Cardiac septum (tissue), 1 donor: ENCODE measurements at regions of chr20 and their contacts with region 1.

Region 1: DNA sequence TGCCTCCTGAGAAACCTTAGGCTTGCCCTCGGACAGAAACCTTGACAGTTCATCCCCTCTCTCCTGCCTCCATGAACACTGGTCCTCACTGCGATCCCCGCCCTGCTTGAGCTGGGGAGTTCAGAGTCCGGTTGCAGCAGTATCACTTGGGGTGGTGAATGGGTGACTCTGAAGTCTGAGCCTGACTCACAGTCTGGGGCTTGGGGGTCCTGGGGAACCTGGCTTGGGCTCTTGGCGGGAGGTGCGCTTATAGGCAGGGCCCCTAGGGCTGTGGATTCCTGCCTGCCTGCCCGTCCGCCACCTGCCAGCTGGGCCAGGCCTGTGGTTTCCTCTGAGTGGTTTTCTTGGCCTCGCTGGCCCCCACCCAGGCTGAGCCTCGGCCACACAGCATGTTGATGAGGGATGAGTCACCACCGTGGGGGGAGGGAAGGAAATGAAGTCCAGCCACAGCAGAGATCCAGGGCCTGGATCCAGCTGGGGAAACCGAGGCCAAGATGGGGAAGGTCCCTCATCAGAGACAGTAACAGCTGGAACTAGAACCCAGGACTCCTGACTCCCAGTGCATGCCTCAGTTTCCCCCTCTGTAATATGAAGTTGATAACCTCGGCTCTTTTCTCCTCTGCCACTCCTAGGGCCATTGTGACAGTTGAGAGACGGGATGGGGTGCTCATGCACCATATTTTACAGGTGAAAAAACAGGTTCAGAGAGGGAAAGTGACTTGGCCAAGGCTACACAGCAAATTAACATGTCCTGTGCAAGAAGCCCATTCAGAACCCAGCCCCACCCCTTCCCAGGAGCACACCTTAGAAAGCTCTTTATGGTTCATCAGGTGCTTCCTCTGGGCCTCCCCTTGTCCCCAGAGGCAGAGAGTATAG is 9.2 kb downstream of the FOXS1 start:
- DNase-seq: peak; percentile 88

Region 2: GRCh38 chr20:31661625-31662371 is 174.4 kb before region 1 on chr20:
- intact Hi-C with region 1: loop called (anchors 10 kb)
- DNase-seq: peak; percentile 93

Region 3: DNA sequence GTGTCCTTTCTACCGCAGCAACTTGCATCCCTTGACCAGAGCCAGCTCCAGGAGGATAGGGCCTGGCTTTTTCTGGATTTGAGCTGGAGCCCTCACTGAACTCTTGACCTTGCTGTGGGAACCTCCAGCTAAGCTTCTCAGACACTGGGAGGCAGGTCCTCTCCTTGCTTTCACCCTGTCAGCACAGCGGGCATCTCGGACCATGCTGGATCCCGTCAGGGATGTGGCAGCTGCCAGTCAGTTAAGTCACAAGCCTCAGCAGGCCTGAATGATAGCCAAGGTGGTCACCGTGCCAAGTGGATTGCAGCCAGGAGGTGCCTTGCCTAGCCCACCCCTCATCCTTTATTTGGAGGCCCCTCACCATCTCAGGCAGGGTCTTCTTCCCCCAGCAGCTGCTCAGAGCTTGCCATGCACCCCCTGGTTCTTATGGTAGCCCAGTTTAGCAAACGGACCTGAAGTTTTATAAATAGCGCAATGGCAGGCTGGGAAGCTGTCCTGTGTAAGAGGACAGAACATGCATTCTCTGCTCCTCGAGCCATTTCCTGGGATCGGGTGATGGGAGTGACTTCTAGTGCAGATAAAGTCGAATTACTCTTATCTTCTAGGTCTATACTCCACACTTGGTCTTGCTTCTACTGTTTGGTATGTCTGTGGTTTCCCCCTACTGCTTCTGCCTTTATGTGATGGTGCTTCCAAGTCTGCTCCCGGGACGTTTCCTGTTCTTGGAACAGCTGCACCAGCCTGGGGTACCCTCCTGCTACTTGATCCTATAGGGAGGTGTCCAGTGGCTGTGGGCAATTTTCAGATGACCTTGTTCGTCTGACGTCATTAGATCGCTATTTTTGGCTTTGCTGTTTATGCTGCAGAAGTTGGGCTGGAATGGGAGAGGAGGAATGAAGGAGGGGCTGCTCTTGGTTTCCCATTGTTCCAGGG is 24.2 kb before region 1 on chr20:
- intact Hi-C with region 1: no loop called
- DNase-seq: no peak

Region 4: DNA sequence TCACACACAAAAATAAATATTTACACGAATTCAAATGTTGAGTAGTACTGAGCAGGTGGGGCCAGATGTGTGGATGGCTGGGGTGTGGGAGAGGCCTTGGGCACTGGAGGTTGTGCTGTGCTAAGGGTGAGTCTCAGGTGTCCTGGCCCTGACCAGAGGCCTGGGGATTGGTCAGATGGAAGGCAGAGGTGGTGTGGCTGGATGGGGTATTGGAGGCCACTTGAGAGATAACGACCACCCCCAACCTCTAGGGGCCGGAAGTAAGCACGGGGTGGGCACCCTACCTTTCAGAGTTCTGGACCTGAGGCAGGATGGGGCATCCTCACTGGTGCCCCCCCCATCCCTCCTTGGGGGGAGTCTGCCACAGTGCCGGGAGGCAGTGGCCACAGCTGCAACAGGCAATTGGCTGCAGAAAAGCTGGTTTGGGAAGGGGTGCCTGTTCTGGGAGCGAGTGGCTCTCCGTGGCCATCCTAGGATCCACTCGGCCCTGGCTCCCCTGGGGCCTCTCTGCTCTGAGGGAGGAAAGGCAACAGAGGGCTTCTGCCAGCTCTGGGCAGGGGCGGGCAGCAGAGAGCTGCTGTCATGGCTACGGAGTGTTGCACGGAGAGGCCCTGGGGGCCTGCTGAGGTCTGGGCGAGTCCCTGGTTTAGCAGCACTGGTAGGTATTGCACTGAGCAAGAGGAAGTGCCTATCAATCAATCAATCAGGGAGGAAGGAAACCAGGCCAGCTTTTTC is 609.5 kb after region 1 on chr20:
- intact Hi-C with region 1: no loop called
- DNase-seq: peak; percentile 71